ENCODE measurements at regions of chrX and their contacts with region 1.

Region 1: GRCh38 chrX:116490104-116490503 is 27.3 kb upstream of the CT83 start:
- DNase-seq: no peak
- ATAC-seq: no peak

Region 2: GRCh38 chrX:118254611-118255010 is 1764.5 kb after region 1 on chrX:
- intact Hi-C with region 1: loop called (anchors 10 kb)
- DNase-seq: no peak
- ATAC-seq: no peak